ENCODE measurements at regions of chr11 and their contacts with region 1.

Region 1: GRCh38 chr11:65418711-65419459 is 3.7 kb upstream of the NEAT1 start:
- DNase-seq: peak; percentile 99
- H3K4me3 ChIP-seq: peak overlapping the region; percentile 58 to 96
- H3K27ac ChIP-seq: peak overlapping the region; percentile 99
- H3K4me1 ChIP-seq: peaks cover 55% of the 10 kb centered on the region
- H3K27me3 ChIP-seq: no peaks in the 10 kb centered on the region
- CTCF ChIP-seq: no peak
- POLR2A ChIP-seq: peak in 1 of 2 donors; percentile 31

Region 2: DNA sequence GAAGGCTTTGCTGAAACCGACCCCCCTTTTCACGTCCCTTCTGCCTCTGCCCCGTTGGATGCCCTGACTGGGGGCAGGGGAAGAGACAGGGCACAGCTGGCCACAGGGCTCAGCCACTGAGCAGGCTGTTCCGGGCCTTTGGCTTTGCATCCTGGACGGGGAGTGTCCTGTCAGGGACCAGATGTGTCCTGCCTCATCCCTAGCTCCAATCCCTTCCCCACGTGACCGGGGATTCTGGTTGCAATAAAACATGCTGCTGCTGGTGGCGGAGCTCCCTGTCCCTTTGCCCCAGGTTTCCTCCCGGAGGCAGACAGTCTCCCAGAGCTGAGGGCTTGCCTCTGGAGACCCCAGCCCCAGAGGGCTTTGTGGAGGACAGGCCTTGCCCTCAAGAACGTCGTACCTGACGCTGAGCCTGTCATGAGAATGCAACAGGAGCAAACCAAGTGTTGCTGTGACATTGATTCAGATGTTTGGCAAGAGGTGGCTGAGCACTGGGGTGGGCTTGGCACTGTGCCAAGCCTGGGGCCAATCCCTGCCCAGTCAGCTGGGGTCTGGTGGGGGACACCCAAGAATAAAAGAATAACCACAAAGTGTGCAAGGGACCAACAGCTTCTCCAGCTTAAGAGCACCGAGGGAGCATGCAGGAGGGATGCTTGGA is 96.9 kb before region 1 on chr11:
- intact Hi-C with region 1: no loop called
- DNase-seq: peak in 1 of 2 donors; percentile 89
- H3K4me3 ChIP-seq: no peak overlapping the region
- H3K27ac ChIP-seq: peak overlapping the region; percentile 33
- H3K4me1 ChIP-seq: peaks cover 43% of the 10 kb centered on the region
- H3K27me3 ChIP-seq: no peaks in the 10 kb centered on the region
- CTCF ChIP-seq: no peak
- POLR2A ChIP-seq: no peak

Region 3: DNA sequence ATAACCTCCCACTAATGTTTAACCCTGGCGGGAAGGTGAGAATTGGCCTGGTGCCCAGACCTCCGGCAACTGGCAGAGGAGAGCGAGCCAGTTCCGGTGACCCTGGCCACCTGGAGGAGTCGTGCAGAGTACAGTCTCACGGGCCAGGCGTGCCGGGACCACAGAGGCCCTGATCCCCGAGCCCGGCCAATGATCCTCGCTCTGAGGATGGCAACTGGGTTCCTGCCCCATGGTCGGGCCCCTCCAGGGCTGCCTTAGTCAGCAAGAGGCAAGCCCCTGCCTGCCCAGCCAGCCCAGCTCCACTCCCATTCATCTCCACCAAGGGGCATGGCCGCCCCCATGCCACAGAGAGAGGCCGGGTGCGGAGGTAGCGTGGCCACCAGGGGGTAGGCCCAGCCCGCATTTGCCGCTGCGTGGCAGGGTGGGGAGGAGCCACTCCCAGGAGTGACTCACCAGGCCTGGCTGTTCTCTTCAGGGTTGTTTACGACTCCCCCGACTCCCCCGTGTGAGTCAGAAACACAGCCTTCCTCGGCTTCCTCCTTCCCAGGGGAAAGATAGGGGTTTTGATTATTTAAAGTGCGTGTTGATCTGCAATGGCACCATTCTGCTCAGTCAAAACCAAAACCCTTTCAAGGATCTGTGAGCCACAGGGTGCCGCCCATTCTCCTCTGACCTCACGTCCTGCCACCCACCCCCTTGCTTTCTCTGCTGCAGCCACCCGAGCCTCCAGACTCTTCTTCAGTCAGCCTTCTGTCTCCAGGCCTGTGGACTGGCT is 36.7 kb before region 1 on chr11 and contains the start of gene SLC25A45:
- intact Hi-C with region 1: loop called (anchors 5 kb)
- DNase-seq: peak in 1 of 2 donors; percentile 99
- H3K4me3 ChIP-seq: peak within 1 kb of the TSS; percentile 42 to 51
- H3K27ac ChIP-seq: peak within 1 kb of the TSS; percentile 98
- H3K4me1 ChIP-seq: peaks cover 67% of the 10 kb centered on the region
- H3K27me3 ChIP-seq: no peaks in the 10 kb centered on the region
- CTCF ChIP-seq: peak; percentile 92 to 95 (median 92)
- POLR2A ChIP-seq: peak in 1 of 2 donors; percentile 29
- total RNA-seq, gene SLC25A45: 2.2 TPM

Region 4: DNA sequence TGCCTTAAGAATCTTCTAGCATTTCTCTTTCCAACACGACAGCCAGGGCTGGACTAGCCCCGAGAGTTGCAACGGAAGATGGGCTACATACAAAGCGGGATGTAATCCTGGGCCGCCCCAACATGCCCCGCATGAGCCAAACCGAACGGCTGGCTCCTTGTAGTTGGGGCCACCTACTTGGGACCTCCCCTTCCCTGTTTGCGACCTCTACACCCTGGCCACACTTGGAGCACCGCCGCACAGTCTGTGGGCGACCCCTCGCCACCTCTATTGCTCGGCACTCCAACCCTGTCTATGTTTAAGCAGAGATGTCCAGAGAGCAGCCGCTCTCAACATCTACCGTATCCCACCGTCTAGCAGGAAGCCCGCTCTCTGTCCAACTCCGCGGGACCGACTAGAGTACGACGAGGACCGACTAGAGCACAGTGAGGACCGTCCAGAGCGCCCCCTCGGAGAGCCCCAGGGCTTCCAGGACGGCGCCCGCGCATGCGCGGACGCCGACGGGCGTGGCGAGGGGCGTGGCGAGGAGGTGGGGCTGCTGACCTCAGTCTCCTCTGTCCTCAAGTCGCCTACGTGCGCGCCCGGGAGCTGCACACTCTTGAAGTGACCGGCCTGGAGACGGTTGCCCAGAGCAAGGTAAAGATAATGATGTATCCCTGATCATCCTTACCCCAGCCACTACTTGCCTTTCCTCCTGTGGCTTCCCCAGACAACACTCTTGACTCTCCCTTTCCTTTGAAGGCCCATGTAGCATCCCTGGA is 36.0 kb after region 1 on chr11:
- intact Hi-C with region 1: no loop called
- DNase-seq: peak in 1 of 2 donors; percentile 98
- H3K4me3 ChIP-seq: peak overlapping the region; percentile 50 to 77
- H3K27ac ChIP-seq: peak overlapping the region; percentile 95
- H3K4me1 ChIP-seq: peaks cover 32% of the 10 kb centered on the region
- H3K27me3 ChIP-seq: no peaks in the 10 kb centered on the region
- CTCF ChIP-seq: no peak
- POLR2A ChIP-seq: peak; percentile 78 to 89

Region 5: DNA sequence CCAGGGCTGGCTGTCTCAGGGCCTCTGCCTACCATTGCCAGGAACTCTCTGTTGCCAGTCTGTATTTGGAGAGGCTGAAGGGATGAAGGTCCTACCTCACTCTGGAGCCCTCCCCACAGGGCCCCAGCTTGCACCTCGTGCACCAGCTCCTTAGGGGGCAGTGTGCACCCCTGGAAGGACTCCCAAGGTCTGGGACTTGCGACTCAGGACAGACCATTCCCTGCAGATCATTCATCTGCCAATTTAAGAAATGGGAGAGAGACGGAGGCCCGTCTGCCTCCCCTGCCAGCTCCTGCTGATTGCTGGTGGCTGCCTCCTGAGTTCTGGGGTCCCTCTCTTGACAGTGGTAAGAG is 52.5 kb after region 1 on chr11:
- intact Hi-C with region 1: loop called (anchors 1 kb)
- DNase-seq: no peak
- H3K4me3 ChIP-seq: peak overlapping the region; percentile 23 to 36
- H3K27ac ChIP-seq: peak overlapping the region; percentile 100
- H3K4me1 ChIP-seq: peaks cover 38% of the 10 kb centered on the region
- H3K27me3 ChIP-seq: no peaks in the 10 kb centered on the region
- CTCF ChIP-seq: peak; percentile 6 to 39 (median 35)
- POLR2A ChIP-seq: no peak

Region 6: DNA sequence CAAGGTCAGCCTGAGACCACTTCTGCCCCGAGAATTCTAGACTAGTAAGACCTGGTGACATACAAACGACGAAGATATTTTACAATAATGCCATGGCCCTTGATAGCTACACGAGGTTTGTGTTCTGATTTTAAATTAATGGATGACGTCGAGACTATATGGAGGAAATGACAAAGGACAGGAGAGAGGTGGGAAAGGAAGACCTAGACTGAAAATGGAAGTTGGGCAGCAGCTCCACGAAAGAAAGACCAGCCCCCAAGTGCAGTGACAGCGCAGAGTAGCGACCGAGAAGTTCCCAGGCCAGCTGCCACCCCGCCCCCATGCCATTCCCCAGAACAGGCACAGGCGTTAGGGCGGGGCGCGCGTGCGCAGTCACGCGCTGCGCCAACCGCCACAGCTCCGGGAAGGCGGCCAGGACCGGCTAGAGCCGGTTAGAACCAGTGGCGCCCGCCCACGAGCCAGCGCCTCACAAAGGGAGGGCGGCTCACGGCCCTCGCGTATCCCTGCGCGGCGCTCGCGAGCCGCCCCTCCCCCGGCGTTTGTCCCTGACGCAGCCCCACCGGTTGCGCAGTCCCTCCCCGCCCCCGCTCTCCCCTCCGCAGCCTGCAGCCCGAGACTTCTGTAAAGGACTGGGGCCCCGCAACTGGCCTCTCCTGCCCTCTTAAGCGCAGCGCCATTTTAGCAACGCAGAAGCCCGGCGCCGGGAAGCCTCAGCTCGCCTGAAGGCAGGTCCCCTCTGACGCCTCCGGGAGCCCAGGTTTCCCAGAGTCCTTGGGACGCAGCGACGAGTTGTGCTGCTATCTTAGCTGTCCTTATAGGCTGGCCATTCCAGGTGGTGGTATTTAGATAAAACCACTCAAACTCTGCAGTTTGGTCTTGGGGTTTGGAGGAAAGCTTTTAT is 78.5 kb after region 1 on chr11:
- intact Hi-C with region 1: loop called (anchors 2 kb)
- DNase-seq: peak in 1 of 2 donors; percentile 99
- H3K4me3 ChIP-seq: peak overlapping the region; percentile 77 to 83
- H3K27ac ChIP-seq: peak overlapping the region; percentile 100
- H3K4me1 ChIP-seq: peaks cover 45% of the 10 kb centered on the region
- H3K27me3 ChIP-seq: no peaks in the 10 kb centered on the region
- CTCF ChIP-seq: peak in 1 of 3 experiments; percentile 20
- POLR2A ChIP-seq: peak in 1 of 2 donors; percentile 89

Region 7: DNA sequence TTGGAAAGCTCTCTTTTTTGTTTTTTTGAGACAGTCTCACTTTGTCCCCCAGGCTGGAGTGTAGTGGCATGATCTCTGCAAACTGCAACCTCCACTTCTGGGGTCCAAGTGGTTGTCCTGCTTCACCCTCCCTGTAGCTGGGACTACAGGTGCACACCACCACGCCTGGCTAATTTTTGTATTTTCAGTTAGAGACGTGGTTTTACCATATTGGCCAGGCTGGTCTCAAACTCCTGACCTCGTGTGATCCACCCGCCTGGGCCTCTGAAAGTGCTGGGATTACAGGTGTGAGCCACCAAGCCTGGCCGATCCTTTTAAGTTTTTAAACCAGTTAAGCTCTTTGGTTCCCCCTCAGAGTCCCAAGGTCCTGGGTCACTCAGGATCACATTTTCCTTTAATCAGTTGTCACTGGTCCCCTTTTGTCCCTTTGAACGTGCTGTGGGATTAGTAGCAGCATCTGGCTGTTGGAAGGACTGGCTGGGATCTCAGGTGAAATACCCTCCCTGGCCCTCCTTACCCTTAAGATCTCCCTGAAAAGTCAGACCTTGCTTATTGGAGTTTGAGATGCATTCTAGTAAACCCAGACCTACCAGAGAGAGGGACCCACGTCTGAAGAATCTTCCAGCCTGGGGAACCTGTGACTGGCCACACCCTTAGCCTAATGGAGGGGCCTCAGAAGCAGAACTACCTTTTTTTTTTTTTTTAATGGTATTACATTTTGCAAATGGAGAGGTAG is 88.1 kb after region 1 on chr11:
- intact Hi-C with region 1: loop called (anchors 2 kb)
- DNase-seq: no peak
- H3K4me3 ChIP-seq: peak overlapping the region; percentile 77 to 83
- H3K27ac ChIP-seq: peak overlapping the region; percentile 100
- H3K4me1 ChIP-seq: peaks cover 49% of the 10 kb centered on the region
- H3K27me3 ChIP-seq: no peaks in the 10 kb centered on the region
- CTCF ChIP-seq: peak in 1 of 3 experiments; percentile 8
- POLR2A ChIP-seq: no peak

Region 8: DNA sequence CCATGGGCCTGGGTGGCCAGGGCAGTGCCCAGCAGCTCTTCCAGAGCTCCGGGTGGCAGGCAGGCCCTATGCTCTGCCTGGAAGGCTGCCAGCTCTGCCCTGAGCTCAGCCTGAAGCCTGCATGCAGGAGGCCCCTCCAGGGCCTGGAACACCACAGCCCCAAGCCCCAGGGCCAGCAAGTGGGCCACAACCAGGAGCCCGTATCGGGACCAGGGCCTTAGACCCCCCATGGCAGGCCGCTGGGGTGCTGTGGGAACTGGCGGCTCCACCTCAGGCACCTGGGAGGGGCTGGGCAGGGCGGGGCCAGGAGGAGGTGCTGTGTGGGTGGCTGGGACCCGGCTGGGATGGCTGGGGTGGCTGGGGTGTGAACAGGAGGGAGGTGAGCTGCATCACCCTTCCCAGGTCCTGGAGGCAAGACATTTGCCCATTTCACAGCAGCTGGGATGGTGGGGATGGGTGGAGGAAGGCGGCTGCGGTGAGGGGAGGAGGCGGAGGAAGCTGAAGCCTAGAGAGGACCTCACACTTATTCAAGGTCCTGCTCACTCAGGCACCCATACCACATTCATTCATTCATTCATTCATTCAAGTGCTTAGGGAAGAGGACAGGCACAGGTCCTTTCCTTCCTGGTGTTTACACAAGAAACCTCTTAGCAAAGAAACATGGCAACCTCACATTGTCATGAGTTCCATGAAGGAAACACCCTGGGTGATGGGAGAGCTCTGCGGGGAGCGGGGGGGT is 176.8 kb after region 1 on chr11 and contains the start of gene KCNK7:
- intact Hi-C with region 1: no loop called
- DNase-seq: no peak
- H3K4me3 ChIP-seq: no peak within 1 kb of the TSS
- H3K27ac ChIP-seq: peak within 1 kb of the TSS; percentile 70
- H3K4me1 ChIP-seq: peaks cover 38% of the 10 kb centered on the region
- H3K27me3 ChIP-seq: no peaks in the 10 kb centered on the region
- CTCF ChIP-seq: no peak
- POLR2A ChIP-seq: no peak
- total RNA-seq, gene KCNK7: 12.0 TPM